CD4-positive, alpha-beta memory T cell (primary cell): ENCODE measurements at regions of chr1 and their contacts with region 1.

Region 1: GRCh38 chr1:27556781-27557595 is 47.0 kb downstream of the AHDC1 start:
- DNase-seq: peak; percentile 65 to 70 (median 69)
- H3K4me3 ChIP-seq: no peak overlapping the region
- H3K4me3 Mint-ChIP-seq: peak overlapping the region; percentile 18 to 78 (median 45)
- H3K27ac ChIP-seq: no peak overlapping the region
- H3K27ac Mint-ChIP-seq: peak overlapping the region in 5 of 7 donors; percentile 49 to 77 (median 59)
- H3K4me1 ChIP-seq: peaks cover 17% of the 10 kb centered on the region
- H3K4me1 Mint-ChIP-seq: peaks cover 18 to 44% (median 28%) of the 10 kb centered on the region in 4 donors
- H3K27me3 ChIP-seq: no peaks in the 10 kb centered on the region
- H3K27me3 Mint-ChIP-seq: no peaks in the 10 kb centered on the region

Region 2: DNA sequence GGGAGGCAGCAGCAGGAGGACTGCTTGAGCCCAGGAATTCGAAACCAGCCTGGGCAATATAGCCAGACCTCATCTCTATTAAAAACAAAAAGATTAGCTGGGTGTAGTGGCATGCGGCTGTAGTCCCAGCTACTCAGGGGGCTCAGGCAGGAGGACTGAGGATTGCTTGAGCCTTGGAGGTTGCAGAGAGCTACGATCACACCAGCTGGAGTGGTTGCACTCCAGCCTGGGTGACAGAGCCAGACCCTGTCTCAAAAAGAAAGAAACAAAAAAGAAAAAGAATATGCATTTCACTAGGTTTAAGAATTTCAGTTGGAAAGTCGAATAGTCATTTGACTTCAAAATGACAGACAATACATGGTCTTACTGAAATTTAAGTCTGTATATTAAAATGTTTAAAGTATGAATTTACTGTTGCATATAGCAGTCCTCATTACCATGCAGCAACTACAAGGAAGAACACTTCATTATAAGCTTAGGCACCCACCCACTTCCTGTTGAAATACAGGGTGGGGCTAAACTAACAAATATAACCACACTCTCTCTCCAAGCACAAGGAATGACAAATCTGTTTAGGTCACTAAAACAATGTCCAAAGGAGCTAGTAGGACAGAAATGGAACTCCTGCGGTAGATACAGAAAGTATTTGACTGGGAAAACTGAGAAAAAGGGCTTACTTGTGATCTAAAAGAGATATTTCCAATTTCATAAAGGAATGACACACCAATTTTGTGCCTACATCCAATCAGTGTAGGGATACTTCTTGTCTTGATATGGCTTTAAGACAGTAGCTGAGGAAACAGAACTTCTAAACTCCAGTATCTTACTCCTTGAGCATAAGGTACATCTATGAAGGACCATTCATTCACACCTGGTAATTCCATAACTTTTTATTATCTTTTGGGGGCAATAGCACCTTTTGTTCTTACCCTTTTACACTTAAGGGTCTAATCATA is 120.5 kb before region 1 on chr1:
- CTCF ChIA-PET with region 1: interaction called, 11 read pairs
- POLR2A ChIA-PET with region 1: interaction called, 3 read pairs
- intact Hi-C with region 1: no loop called
- DNase-seq: peak; percentile 39 to 59 (median 43)
- H3K4me3 ChIP-seq: peak overlapping the region; percentile 25 to 45
- H3K4me3 Mint-ChIP-seq: peak overlapping the region; percentile 59 to 85 (median 78)
- H3K27ac ChIP-seq: peak overlapping the region; percentile 40
- H3K27ac Mint-ChIP-seq: peak overlapping the region; percentile 76 to 97 (median 90)
- H3K4me1 ChIP-seq: peaks cover 85% of the 10 kb centered on the region
- H3K4me1 Mint-ChIP-seq: peaks cover 56 to 81% (median 68%) of the 10 kb centered on the region in 4 donors
- H3K27me3 ChIP-seq: no peaks in the 10 kb centered on the region
- H3K27me3 Mint-ChIP-seq: no peaks in the 10 kb centered on the region

Region 3: DNA sequence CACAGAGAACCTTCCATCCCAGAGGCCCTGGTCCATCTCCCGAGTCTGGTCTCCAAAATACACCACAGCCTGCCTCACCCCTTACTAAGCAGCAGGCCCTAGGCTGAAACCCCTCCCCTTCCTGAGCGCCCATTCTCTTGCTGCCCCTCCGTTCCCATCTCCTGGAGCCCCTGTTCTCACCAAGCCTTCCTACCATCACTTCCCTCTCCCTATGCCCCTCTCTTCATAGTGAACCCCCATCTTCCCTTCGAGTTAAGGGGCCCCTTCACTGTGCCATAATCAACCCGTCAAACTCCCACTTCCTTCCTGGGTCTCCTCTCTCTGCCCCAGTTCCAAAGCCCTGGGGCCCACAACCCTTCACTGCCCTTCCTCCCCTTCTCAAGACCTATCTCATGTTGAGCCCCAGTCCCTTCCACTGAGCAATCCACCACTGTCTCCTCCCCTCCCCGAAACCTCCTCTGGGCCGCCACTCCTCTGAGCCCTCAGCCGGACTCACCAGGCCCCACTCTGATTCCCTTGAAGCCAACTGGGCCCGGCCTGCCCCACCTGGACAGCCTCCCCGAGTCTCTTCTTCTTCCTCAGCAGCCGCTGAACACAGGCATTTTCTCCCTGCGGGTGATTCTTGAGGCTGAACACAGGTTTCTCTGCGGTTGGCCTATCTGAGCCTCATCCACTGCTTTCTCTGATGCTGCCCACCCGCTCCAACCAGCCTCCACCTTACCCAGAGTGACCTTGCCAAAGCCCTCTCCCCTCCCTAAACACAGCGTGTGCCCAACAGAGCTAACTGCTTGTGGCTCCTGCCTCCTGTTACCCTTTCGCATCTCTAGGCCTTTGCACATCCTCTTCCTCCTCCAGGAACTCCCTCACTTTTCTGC is 24.8 kb before region 1 on chr1:
- CTCF ChIA-PET with region 1: interaction called, 36 read pairs
- POLR2A ChIA-PET with region 1: interaction called, 3 read pairs
- intact Hi-C with region 1: no loop called
- DNase-seq: no peak
- H3K4me3 ChIP-seq: no peak overlapping the region
- H3K4me3 Mint-ChIP-seq: peak overlapping the region in 3 of 8 donors; percentile 15 to 62 (median 17)
- H3K27ac ChIP-seq: no peak overlapping the region
- H3K27ac Mint-ChIP-seq: peak overlapping the region in 6 of 7 donors; percentile 79 to 88 (median 81)
- H3K4me1 ChIP-seq: peaks cover 25% of the 10 kb centered on the region
- H3K4me1 Mint-ChIP-seq: peaks cover 13 to 36% (median 22%) of the 10 kb centered on the region in 4 donors
- H3K27me3 ChIP-seq: no peaks in the 10 kb centered on the region
- H3K27me3 Mint-ChIP-seq: no peaks in the 10 kb centered on the region

Region 4: DNA sequence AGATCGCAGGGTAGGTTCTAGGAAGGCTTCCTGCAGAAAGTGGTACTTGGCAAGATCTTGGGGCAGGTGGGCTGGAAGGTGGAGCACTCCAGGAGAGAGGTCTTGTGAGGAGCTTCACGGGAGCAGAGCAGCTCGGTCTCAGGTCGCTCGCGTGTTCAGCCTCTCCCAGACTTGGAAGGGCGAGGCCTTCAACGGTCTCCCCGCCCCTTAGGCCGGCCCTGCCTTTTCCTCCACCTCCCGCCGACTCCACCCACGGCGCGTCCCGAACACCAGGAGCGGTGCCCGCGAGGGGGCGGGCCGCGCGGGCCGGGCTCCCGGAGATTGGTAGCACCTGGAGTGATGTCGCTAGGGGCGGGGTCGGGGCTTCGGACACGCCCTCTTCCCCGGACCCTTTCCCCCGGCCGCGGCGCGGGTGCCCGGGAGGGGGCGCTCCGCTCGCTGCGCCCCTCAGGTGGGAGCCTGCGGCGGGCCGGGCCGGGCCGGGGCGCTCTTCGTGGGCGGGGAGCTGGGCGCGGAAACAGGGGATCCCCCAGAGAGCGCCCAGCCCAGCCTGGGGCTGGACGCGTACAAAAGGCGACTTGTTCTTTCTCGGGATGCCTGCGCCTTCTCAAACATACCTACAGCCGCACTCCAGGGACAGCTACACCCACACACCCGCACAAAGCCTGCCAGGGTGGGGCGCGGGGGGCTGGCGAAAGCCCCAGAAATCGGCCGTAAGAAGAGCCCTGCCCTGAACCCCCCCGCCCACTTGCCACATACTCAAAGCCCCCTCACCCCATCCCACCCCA is 11.5 kb after region 1 on chr1:
- CTCF ChIA-PET with region 1: interaction called, 93 read pairs
- POLR2A ChIA-PET with region 1: interaction called, 20 read pairs
- intact Hi-C with region 1: loop called (anchors 1 kb)
- DNase-seq: peak; percentile 92 to 94 (median 93)
- H3K4me3 ChIP-seq: peak overlapping the region in 1 of 2 donors; percentile 55
- H3K4me3 Mint-ChIP-seq: peak overlapping the region; percentile 66 to 92 (median 84)
- H3K27ac ChIP-seq: peak overlapping the region; percentile 60
- H3K27ac Mint-ChIP-seq: peak overlapping the region; percentile 71 to 92 (median 86)
- H3K4me1 ChIP-seq: peaks cover 27% of the 10 kb centered on the region
- H3K4me1 Mint-ChIP-seq: peaks cover 16 to 39% (median 22%) of the 10 kb centered on the region in 4 donors
- H3K27me3 ChIP-seq: no peaks in the 10 kb centered on the region
- H3K27me3 Mint-ChIP-seq: no peaks in the 10 kb centered on the region

Region 5: DNA sequence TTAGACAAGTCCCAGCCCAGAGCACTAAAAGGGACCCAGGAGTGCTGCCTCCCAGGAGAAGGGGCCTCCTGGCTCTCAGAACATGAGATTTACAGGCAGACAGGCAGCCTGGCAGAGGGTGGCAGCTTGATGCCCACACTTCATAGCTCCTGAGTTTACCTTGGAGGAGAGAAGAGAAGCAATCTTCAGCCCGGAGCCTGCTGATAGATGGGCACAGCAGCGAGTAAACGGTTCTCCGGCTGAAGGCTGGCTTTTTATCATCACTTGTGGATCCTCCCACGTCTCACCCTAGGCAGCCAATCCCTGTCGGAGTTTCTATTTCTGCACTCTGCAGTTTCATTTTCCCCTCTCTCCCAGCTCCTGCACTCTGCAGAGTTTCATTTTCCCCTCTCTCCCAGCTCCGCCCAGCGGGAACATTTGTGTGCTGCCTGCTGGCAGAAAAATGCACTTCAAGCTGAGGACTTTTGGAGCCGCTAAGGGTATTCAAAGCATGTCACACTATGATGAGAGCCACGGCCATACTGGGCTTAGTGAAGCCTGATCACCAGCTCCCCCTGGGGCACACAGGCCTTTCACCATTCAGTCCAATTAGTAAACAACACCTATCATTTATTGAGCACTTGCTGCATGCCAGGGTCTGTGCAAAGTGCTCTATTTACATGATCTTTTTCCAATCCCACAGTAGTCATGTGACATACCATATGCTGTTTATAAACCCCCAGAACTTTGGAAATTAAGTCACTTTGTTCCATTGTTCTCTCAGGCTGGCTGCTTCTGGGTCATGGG is 115.2 kb after region 1 on chr1 and contains the start of gene IFI6:
- CTCF ChIA-PET with region 1: interaction called, 18 read pairs
- POLR2A ChIA-PET with region 1: interaction called, 3 read pairs
- intact Hi-C with region 1: no loop called
- DNase-seq: peak; percentile 82 to 92 (median 82)
- H3K4me3 ChIP-seq: peak within 1 kb of the TSS; percentile 63 to 65
- H3K4me3 Mint-ChIP-seq: peak within 1 kb of the TSS; percentile 91 to 99 (median 96)
- H3K27ac ChIP-seq: peak within 1 kb of the TSS; percentile 85
- H3K27ac Mint-ChIP-seq: peak within 1 kb of the TSS; percentile 90 to 99 (median 97)
- H3K4me1 ChIP-seq: peaks cover 41% of the 10 kb centered on the region
- H3K4me1 Mint-ChIP-seq: peaks cover 24 to 40% (median 33%) of the 10 kb centered on the region in 4 donors
- H3K27me3 ChIP-seq: no peaks in the 10 kb centered on the region
- H3K27me3 Mint-ChIP-seq: no peaks in the 10 kb centered on the region
- total RNA-seq, gene IFI6: 23.0 to 24.9 TPM